ENCODE measurements at regions of chr4 and their contacts with region 1.

Region 1: GRCh38 chr4:94595879-94596483 is 144.2 kb downstream of the PDLIM5 start:
- DNase-seq: no peak
- ATAC-seq: peak; percentile 77
- H3K4me3 ChIP-seq: no peak overlapping the region
- H3K27ac ChIP-seq: no peak overlapping the region
- H3K4me1 ChIP-seq: peaks cover 1 to 5% of the 10 kb centered on the region in 2 donors
- H3K27me3 ChIP-seq: no peaks in the 10 kb centered on the region

Region 2: DNA sequence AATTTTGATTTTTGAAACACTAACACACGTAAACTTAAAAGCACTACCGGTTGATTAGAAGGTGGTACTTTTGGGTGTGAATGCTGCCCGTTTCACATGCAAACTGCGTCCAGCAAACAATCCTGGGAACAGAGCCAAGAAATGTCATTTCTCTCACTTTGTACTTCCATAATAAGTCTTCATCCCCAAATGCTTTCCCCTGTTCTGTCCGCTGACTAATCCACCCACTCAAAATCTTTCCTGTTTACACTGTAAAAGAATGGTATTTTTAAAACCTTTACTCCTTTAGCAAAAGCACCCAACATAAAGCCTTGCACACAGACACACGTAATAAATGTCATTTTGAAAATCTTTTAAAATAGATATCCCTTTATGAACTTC is 183.3 kb before region 1 on chr4:
- intact Hi-C with region 1: loop called (anchors 5 kb)
- DNase-seq: no peak
- ATAC-seq: no peak
- H3K4me3 ChIP-seq: peak overlapping the region in 1 of 2 donors; percentile 59
- H3K27ac ChIP-seq: peak overlapping the region; percentile 57 to 71
- H3K4me1 ChIP-seq: peaks cover 6 to 7% of the 10 kb centered on the region in 2 donors
- H3K27me3 ChIP-seq: no peaks in the 10 kb centered on the region